Activated T-helper 2 cell treated with anti-CD3 and anti-CD28 coated beads, Interferon-gamma antibody, Interleukin-2, Interleukin-4, amounts not matched to agents 10 μg/mL and 5 μg/mL and 100 μg/mL, durations not matched to agents 14 hours and 24 hours and 36 hours (primary cell): ENCODE measurements at regions of chr11 and their contacts with region 1.

Region 1: GRCh38 chr11:112289588-112290492 is 29.2 kb upstream of the PLET1 start:
- DNase-seq: peak; percentile 83
- H3K4me3 Mint-ChIP-seq: peak overlapping the region; percentile 70
- H3K27ac Mint-ChIP-seq: no peak overlapping the region
- H3K4me1 Mint-ChIP-seq: peaks cover 20% of the 10 kb centered on the region
- H3K27me3 Mint-ChIP-seq: peaks cover 19% of the 10 kb centered on the region

Region 2: GRCh38 chr11:112265721-112266409 is 24.0 kb before region 1 on chr11:
- intact Hi-C with region 1: no loop called
- DNase-seq: no peak
- H3K4me3 Mint-ChIP-seq: no peak overlapping the region
- H3K27ac Mint-ChIP-seq: no peak overlapping the region
- H3K4me1 Mint-ChIP-seq: no peaks in the 10 kb centered on the region
- H3K27me3 Mint-ChIP-seq: no peaks in the 10 kb centered on the region

Region 3: DNA sequence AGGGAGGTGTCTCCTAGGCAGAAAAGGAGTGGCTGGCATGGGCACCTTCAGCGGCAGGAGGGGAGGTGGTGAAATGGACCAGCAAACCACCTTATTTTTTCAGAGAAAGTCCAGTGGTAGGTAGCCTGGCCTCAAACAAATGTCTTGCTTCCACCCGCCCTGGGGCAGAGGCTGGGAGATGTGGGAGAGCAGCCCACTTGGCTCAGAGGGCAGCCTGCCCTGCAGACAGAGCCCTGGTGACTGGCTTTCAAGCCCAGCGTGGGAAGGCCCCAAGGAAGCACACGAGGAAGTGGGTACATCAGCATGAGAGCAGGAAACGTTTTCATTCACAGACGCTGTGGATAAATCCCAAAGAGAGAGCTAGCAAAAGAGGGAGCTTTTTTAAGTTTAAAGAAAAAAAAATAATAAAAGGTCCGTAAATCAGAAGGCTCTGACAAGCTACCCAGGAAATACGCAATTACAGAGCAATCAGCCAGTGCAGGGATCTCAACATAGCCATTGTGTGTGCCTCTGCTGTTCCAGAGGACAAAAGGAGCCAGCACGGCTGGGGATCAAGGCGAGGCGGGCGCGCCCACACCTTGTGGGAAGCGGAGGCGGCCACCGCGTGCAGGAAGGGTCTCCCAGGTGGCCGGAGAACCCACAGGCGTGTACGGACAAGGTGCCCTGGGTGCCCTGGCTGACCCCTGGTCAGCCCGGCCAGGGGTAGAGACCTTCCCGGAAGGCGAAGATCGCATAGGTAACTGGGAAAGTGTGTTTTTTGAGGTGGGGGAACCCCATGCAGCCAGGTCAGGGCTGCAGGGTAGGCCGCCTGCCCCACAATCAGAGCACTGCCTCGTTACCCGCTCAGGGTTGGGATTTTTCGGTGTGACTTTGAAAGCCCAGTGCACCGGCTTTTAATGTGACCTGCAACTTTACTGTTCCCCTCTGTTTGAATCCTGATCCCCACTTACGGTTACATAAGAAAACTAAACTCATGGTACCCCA is 209.7 kb after region 1 on chr11:
- intact Hi-C with region 1: no loop called
- DNase-seq: no peak
- H3K4me3 Mint-ChIP-seq: no peak overlapping the region
- H3K27ac Mint-ChIP-seq: no peak overlapping the region
- H3K4me1 Mint-ChIP-seq: no peaks in the 10 kb centered on the region
- H3K27me3 Mint-ChIP-seq: peaks cover 3% of the 10 kb centered on the region

Region 4: DNA sequence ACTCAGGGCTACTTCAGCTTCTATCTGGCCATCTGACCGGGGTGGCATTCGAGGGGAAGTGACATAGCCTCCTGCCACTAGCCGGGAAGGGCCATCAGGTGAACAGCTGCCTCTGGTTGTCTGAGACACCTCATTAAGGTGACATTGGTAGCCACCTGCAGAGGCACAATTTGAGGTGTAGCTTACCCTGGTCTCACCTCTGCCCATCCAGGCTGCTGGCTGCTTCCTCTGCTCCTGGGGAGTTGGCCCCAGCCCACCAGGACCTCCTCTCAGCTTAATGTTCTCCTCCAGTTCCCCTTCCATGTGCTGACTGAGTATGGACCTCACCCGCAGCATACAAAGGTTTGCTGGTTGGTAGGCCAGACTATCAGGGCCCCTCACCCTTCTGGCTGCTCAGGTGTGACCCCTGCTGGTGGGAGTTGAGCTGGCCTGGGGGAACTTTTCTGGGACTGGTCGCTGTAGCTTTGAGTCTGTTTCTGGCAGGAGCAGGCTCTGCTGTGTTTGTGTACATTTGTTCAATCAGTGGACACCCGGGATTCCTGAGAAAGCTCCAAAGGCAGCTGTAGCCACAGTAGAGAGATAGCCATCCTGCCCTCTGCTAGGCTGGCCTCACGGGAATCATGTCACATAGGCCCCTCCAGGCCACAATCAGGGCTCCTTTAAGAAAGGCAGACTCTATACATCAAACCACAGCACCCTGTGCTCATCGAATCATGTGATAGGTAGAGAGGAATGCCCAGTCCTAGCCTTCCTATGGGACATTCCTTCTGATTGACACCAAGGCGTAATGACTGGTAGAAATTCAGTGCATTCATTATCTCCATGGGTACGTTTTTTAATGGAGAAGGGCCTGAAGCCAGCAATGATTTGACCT is 265.9 kb after region 1 on chr11:
- intact Hi-C with region 1: loop called (anchors 1 kb)
- DNase-seq: peak; percentile 49
- H3K4me3 Mint-ChIP-seq: no peak overlapping the region
- H3K27ac Mint-ChIP-seq: no peak overlapping the region
- H3K4me1 Mint-ChIP-seq: no peaks in the 10 kb centered on the region
- H3K27me3 Mint-ChIP-seq: peaks cover 7% of the 10 kb centered on the region